ENCODE measurements at regions of chr14 and their contacts with region 1.

Region 1: GRCh38 chr14:64764641-64765520 is 60.7 kb downstream of the PLEKHG3 start:
- DNase-seq: peak; percentile 69
- H3K4me3 ChIP-seq: peak overlapping the region; percentile 51
- H3K27ac ChIP-seq: peak overlapping the region; percentile 75
- H3K4me1 ChIP-seq: peaks cover 49% of the 10 kb centered on the region
- H3K27me3 ChIP-seq: peaks cover 9% of the 10 kb centered on the region
- CTCF ChIP-seq: peak; percentile 90

Region 2: GRCh38 chr14:64363265-64363846 is 401.5 kb before region 1 on chr14:
- intact Hi-C with region 1: no loop called
- DNase-seq: no peak
- H3K4me3 ChIP-seq: no peak overlapping the region
- H3K27ac ChIP-seq: no peak overlapping the region
- H3K4me1 ChIP-seq: no peaks in the 10 kb centered on the region
- H3K27me3 ChIP-seq: no peaks in the 10 kb centered on the region
- CTCF ChIP-seq: no peak

Region 3: DNA sequence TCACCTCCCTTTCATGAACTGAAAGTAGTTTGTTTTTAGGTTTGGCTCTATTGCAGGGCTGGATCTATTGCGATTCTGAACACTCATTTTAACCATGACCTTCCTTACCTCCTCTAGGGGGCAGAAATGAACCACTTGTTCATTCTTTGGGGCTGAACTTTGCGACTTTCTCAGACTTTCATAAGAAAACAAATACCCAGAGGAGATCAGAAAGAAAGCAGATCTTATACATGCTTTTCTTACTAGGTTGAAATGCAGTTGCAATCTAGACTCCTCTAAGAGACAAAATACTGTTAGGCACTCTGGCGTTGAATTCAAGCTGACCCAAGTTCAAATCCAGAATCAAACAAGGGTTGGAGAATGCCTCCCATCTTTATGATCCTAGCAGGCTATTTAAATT is 93.3 kb before region 1 on chr14:
- intact Hi-C with region 1: loop called (anchors 5 kb)
- DNase-seq: no peak
- H3K4me3 ChIP-seq: no peak overlapping the region
- H3K27ac ChIP-seq: no peak overlapping the region
- H3K4me1 ChIP-seq: peaks cover 5% of the 10 kb centered on the region
- H3K27me3 ChIP-seq: no peaks in the 10 kb centered on the region
- CTCF ChIP-seq: peak; percentile 77

Measured in left ventricle myocardium inferior (tissue), 1 donor.